ENCODE measurements at regions of chr1 and their contacts with region 1.

Region 1: GRCh38 chr1:206982216-206982615 is 12.0 kb upstream of the FCAMR start:
- DNase-seq: peak; percentile 81
- H3K4me3 Mint-ChIP-seq: no peak overlapping the region
- H3K27ac Mint-ChIP-seq: no peak overlapping the region
- H3K4me1 Mint-ChIP-seq: no peaks in the 10 kb centered on the region
- H3K27me3 Mint-ChIP-seq: no peaks in the 10 kb centered on the region
- CTCF ChIP-seq: peak; percentile 99

Region 2: GRCh38 chr1:206590025-206590758 is 392.0 kb before region 1 on chr1:
- CTCF ChIA-PET with region 1: interaction called, 20 read pairs
- POLR2A ChIA-PET with region 1: interaction called, 3 read pairs
- intact Hi-C with region 1: no loop called
- DNase-seq: peak; percentile 95
- H3K4me3 Mint-ChIP-seq: no peak overlapping the region
- H3K27ac Mint-ChIP-seq: peak overlapping the region; percentile 66
- H3K4me1 Mint-ChIP-seq: peaks cover 28% of the 10 kb centered on the region
- H3K27me3 Mint-ChIP-seq: no peaks in the 10 kb centered on the region
- CTCF ChIP-seq: peak; percentile 41

Region 3: GRCh38 chr1:206684478-206685333 is 297.5 kb before region 1 on chr1 and contains the start of gene MAPKAPK2:
- CTCF ChIA-PET with region 1: interaction called, 16 read pairs
- POLR2A ChIA-PET with region 1: no interaction called
- intact Hi-C with region 1: no loop called
- DNase-seq: peak; percentile 83
- H3K4me3 Mint-ChIP-seq: peak within 1 kb of the TSS; percentile 93
- H3K27ac Mint-ChIP-seq: peak within 1 kb of the TSS; percentile 97
- H3K4me1 Mint-ChIP-seq: peaks cover 46% of the 10 kb centered on the region
- H3K27me3 Mint-ChIP-seq: no peaks in the 10 kb centered on the region
- CTCF ChIP-seq: no peak
- total RNA-seq, gene MAPKAPK2: 142 and 178 TPM in 2 replicates

Region 4: GRCh38 chr1:206808615-206809014 is 173.6 kb before region 1 on chr1:
- CTCF ChIA-PET with region 1: interaction called, 59 read pairs
- POLR2A ChIA-PET with region 1: interaction called, 4 read pairs
- intact Hi-C with region 1: loop called (anchors 2 kb)
- DNase-seq: peak; percentile 67
- H3K4me3 Mint-ChIP-seq: no peak overlapping the region
- H3K27ac Mint-ChIP-seq: no peak overlapping the region
- H3K4me1 Mint-ChIP-seq: peaks cover 5% of the 10 kb centered on the region
- H3K27me3 Mint-ChIP-seq: peaks cover 41% of the 10 kb centered on the region
- CTCF ChIP-seq: peak; percentile 30

Region 5: GRCh38 chr1:206967096-206967849 is 14.9 kb before region 1 on chr1:
- CTCF ChIA-PET with region 1: interaction called, 161 read pairs
- POLR2A ChIA-PET with region 1: interaction called, 9 read pairs
- intact Hi-C with region 1: no loop called
- DNase-seq: peak; percentile 53
- H3K4me3 Mint-ChIP-seq: no peak overlapping the region
- H3K27ac Mint-ChIP-seq: no peak overlapping the region
- H3K4me1 Mint-ChIP-seq: peaks cover 11% of the 10 kb centered on the region
- H3K27me3 Mint-ChIP-seq: peaks cover 27% of the 10 kb centered on the region
- CTCF ChIP-seq: no peak

Region 6: GRCh38 chr1:207025144-207025880 is 43.1 kb after region 1 on chr1:
- CTCF ChIA-PET with region 1: interaction called, 36 read pairs
- POLR2A ChIA-PET with region 1: interaction called, 26 read pairs
- intact Hi-C with region 1: no loop called
- DNase-seq: no peak
- H3K4me3 Mint-ChIP-seq: peak overlapping the region; percentile 3
- H3K27ac Mint-ChIP-seq: peak overlapping the region; percentile 99
- H3K4me1 Mint-ChIP-seq: peaks cover 73% of the 10 kb centered on the region
- H3K27me3 Mint-ChIP-seq: no peaks in the 10 kb centered on the region
- CTCF ChIP-seq: no peak

Region 7: GRCh38 chr1:207172885-207173284 is 190.7 kb after region 1 on chr1:
- CTCF ChIA-PET with region 1: no interaction called
- POLR2A ChIA-PET with region 1: no interaction called
- intact Hi-C with region 1: no loop called
- DNase-seq: no peak
- H3K4me3 Mint-ChIP-seq: no peak overlapping the region
- H3K27ac Mint-ChIP-seq: no peak overlapping the region
- H3K4me1 Mint-ChIP-seq: no peaks in the 10 kb centered on the region
- H3K27me3 Mint-ChIP-seq: no peaks in the 10 kb centered on the region
- CTCF ChIP-seq: no peak